Sciatic nerve (tissue), 2 donors: ENCODE measurements at regions of chr2 and their contacts with region 1.

Region 1: GRCh38 chr2:220068846-220069245 is 441.4 kb downstream of the SLC4A3 start:
- DNase-seq: no peak
- ATAC-seq: no peak

Region 2: DNA sequence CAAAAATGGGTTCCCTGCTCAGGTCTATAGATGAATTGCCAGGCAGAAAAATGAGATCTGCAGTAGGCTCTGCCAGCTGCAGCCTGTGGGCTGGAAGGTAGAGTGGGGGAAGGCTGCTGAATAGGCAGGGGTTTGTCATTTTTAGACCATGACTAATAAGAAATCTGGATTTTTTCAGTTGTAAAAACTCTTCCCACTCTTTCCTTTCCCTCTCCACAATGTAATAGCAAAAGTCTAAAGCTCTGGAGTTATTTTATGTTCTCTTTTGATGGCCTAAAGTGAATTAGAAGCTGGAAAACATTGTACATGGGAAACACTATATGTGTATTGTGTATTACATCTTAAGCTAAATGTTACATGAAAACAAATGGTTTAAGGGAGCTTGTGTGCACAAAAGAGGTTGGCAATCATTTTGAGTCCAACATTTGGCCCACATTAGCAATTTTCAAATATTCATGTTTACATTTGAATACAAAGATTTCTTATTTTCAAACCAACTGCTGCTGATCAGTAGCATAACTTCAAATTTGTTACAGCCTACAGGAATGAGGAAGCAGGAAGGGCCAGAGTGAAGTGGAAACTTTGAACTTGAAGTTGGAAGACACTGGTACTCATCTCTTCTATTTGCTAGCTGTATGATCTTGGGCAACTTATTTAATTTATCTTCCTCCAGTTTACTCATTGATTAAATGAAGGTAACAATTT is 34.3 kb before region 1 on chr2:
- intact Hi-C with region 1: loop called (anchors 1 kb)
- DNase-seq: no peak
- ATAC-seq: no peak

Region 3: DNA sequence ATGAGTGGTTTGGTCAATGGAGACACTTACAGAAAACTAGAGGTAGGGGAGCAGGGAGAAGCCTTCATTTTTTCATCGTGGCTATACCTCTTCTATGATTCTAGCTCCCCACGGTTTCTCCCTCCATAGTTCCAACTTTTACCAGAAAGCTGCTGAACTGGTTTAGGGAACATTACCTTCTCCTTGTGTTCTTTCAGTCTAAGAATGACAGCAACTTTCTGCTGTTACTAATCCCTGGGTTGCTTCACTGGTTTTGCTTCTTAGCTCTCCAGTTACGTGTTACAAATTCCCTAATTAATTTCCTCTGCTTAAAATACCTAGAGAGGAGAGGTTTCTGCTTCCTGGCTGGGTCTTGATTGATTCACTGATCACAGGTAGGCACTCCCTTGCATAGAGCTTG is 58.5 kb after region 1 on chr2:
- intact Hi-C with region 1: no loop called
- DNase-seq: no peak
- ATAC-seq: no peak